ENCODE measurements at regions of chr22 and their contacts with region 1.

Region 1: DNA sequence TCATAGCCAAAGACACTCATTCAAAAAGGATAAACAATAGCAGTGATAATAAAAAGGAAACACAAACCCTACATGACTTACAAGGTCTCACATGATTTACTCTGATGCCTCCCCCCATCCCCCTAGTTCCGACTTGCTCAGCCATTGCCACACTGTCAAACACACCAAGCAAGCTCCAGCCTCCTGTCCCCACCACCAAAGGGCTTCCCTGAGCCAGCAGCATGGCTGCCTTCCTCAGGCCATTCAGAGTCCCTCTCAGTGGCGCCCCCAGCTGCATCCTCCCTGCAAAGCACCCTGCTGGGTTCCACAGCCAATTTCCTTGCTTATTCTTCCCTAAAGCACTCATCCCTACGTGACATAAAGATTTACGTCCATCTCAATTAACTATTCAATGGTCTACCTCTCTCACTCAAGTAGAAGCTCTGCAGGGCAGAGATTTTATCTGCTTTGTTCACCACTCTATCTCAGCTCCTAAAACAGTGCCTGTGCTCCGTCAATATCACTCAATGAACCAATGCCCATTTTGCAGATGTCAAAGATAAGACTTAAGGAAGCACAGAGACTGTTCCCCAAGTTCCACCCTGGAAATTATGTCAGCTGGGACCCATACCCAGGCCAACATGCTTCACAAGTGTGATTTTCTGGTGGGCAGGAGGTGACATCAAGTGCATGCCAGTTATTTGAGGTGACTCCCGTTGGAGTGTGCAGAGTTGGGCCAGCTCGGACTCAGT is 106.9 kb downstream of the SYN3 start:
- DNase-seq: no peak

Region 2: DNA sequence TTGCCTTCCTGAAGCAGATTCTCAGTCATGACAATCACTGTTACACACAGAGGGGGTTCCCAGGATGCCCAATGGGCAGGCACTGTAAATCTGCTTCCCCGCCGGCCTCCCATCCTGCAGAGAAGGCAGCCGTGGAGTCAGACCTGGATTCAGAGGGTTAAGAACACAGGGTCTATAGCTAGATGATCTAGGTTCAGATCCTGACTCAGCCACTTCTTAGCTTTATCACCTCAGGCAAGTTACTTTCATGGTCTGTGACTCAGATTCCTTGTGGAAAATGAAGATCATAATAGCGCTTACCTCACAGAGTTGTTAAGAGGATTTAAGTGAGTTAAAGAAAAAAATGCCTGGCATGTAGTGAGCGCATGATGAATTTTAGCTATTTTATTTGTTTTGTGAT is 53.8 kb before region 1 on chr22:
- intact Hi-C with region 1: no loop called
- DNase-seq: no peak

Region 3: DNA sequence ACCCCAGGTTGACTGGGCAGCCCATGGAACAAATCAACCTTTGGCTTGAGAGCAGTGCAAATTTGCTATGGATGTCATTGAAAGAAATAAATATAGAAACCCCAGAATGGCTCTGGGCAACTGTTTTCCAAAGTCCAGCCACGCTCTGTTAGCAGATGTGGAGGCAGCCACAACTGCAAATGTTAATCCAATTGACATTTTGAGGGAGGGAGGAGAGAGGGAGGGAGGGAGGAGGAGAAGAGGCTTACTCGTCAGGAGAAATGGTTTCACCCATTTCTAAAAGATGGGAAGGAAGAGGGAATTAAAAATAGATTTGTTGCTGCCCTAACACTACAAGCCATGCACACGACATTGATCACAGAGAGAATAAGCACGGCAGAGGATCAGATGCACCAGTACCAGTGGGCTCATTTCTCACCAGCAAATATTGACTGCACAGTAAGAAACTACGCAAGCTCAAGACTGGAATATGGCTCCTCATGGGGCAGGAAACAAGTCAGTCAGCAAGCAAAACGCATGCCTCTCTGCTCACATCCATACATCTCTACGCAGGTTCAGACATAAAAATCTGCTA is 739.9 kb after region 1 on chr22:
- intact Hi-C with region 1: loop called in 1 of 2 experiments (anchors 5 kb)
- DNase-seq: no peak

Measured in posterior vena cava (tissue), 2 donors.